Naive thymus-derived CD4-positive, alpha-beta T cell (primary cell): ENCODE measurements at regions of chr2 and their contacts with region 1.

Region 1: GRCh38 chr2:161954103-161954502 is 119.9 kb downstream of the DPP4 start:
- DNase-seq: peak in 7 of 9 donors; percentile 48 to 79 (median 73)
- ATAC-seq: peak; percentile 77
- H3K4me3 ChIP-seq: peak overlapping the region; percentile 12
- H3K4me3 Mint-ChIP-seq: peak overlapping the region in 9 of 10 donors; percentile 42 to 77 (median 60)
- H3K27ac ChIP-seq: no peak overlapping the region
- H3K27ac Mint-ChIP-seq: peak overlapping the region; percentile 19 to 88 (median 78)
- H3K4me1 ChIP-seq: peaks cover 47 to 63% of the 10 kb centered on the region in 2 donors
- H3K4me1 Mint-ChIP-seq: peaks cover 33 to 65% (median 51%) of the 10 kb centered on the region in 7 donors
- H3K27me3 ChIP-seq: no peaks in the 10 kb centered on the region
- H3K27me3 Mint-ChIP-seq: no peaks in the 10 kb centered on the region

Region 2: DNA sequence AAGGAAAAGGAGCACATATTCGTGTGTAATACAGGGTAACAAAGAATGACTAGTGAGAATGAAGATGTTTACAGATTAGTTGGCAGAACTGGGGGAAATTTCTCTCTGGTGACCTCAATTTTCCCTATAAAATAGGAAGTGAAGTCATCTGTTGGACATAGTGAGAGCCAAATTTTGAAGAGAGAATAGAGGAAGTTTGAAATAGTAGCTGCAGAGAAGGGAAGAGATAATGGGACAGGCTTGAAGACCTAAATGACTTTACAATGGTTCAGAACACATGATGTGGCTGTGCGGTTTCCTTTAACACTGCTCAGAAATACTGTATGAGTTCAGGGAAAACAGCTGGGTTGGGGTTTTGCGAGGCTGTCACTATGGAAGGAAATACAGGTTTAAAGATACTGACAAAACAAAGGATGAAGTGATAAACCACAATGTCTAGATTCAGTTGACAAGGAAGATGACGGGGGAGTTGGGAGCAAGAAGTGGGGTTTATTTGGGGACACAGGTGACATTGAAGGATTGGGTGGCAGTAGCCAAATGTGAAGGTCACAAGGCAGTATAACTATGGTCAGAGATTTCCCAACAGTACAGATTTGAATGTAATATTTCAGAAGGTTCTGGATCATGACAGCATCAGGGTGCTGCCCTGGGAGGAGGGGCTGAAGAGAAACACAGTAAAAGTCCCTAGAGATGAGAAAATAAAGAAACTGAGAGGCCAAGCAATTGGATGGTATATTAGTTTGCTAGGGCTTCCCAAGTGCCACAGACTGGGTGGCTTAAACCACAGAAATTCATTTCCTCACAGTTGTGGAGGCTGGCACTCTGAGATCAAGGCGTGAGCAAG is 876.5 kb before region 1 on chr2:
- CTCF ChIA-PET with region 1: no interaction called
- POLR2A ChIA-PET with region 1: no interaction called
- intact Hi-C with region 1: loop called in 1 of 2 experiments (anchors 5 kb)
- DNase-seq: peak; percentile 10 to 84 (median 73)
- ATAC-seq: peak; percentile 90
- H3K4me3 ChIP-seq: peak overlapping the region; percentile 5
- H3K4me3 Mint-ChIP-seq: peak overlapping the region; percentile 1 to 76 (median 62)
- H3K27ac ChIP-seq: peak overlapping the region; percentile 40
- H3K27ac Mint-ChIP-seq: peak overlapping the region; percentile 60 to 94 (median 88)
- H3K4me1 ChIP-seq: peaks cover 23 to 25% of the 10 kb centered on the region in 2 donors
- H3K4me1 Mint-ChIP-seq: peaks cover 24 to 60% (median 29%) of the 10 kb centered on the region in 7 donors
- H3K27me3 ChIP-seq: no peaks in the 10 kb centered on the region
- H3K27me3 Mint-ChIP-seq: no peaks in the 10 kb centered on the region

Region 3: DNA sequence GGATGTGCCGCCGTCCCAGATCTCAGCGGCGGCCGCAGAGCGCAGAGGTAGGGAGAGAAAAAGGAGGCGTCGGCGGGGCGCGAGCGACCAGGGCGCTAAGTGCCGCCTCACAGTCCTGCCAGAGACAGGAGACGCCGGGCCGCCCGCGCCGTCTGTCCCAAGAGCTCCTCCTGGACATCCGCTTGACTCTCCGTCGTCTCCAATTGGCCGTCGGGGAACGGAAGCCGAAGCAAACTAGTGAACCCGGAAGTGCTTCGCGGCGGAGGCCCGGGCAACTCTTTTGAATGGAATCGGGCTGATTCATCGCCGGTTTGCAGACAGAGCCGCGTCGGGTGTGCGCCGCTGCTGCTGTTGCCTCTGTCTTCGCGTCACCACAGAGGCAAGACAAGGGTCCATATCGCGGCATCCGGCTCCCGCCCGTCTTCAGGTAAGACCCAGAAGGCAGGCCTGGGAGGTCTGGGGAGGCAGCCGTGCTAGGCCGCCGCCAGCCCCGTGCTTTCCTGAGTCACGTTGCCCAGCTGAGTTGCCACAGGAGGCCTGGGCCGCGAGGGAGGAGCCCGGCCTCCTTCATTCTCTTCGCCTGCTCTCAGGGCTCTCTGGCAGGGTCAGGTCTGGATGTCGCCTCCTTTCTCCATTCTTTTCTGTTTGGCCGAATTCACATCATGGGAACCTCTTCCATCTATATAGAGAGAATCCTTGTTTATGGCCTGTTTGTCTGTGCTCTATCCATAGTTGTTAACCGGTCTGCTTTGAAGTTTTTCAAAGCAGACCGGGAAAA is 645.7 kb before region 1 on chr2 and contains the start of gene PSMD14:
- CTCF ChIA-PET with region 1: no interaction called
- POLR2A ChIA-PET with region 1: no interaction called
- intact Hi-C with region 1: loop called in 1 of 2 experiments (anchors 5 kb)
- DNase-seq: peak; percentile 67 to 88 (median 85)
- ATAC-seq: peak; percentile 95
- H3K4me3 ChIP-seq: peak within 1 kb of the TSS; percentile 94
- H3K4me3 Mint-ChIP-seq: peak within 1 kb of the TSS; percentile 89 to 98 (median 95)
- H3K27ac ChIP-seq: peak within 1 kb of the TSS; percentile 77
- H3K27ac Mint-ChIP-seq: peak within 1 kb of the TSS; percentile 92 to 97 (median 95)
- H3K4me1 ChIP-seq: peaks cover 3 to 19% of the 10 kb centered on the region in 2 donors
- H3K4me1 Mint-ChIP-seq: peaks cover 24 to 65% (median 42%) of the 10 kb centered on the region in 7 donors
- H3K27me3 ChIP-seq: no peaks in the 10 kb centered on the region
- H3K27me3 Mint-ChIP-seq: peaks cover 0 to 9% (median 3%) of the 10 kb centered on the region in 5 donors
- total RNA-seq, gene PSMD14: 13.2 to 69.5 (median 23.2) TPM

Region 4: GRCh38 chr2:161780881-161781280 is 173.2 kb before region 1 on chr2:
- CTCF ChIA-PET with region 1: no interaction called
- POLR2A ChIA-PET with region 1: no interaction called
- intact Hi-C with region 1: no loop called
- DNase-seq: no peak
- ATAC-seq: no peak
- H3K4me3 ChIP-seq: no peak overlapping the region
- H3K4me3 Mint-ChIP-seq: no peak overlapping the region
- H3K27ac ChIP-seq: no peak overlapping the region
- H3K27ac Mint-ChIP-seq: no peak overlapping the region
- H3K4me1 ChIP-seq: no peaks in the 10 kb centered on the region
- H3K4me1 Mint-ChIP-seq: no peaks in the 10 kb centered on the region
- H3K27me3 ChIP-seq: no peaks in the 10 kb centered on the region
- H3K27me3 Mint-ChIP-seq: peaks cover 0 to 27% (median 9%) of the 10 kb centered on the region in 5 donors

Region 5: DNA sequence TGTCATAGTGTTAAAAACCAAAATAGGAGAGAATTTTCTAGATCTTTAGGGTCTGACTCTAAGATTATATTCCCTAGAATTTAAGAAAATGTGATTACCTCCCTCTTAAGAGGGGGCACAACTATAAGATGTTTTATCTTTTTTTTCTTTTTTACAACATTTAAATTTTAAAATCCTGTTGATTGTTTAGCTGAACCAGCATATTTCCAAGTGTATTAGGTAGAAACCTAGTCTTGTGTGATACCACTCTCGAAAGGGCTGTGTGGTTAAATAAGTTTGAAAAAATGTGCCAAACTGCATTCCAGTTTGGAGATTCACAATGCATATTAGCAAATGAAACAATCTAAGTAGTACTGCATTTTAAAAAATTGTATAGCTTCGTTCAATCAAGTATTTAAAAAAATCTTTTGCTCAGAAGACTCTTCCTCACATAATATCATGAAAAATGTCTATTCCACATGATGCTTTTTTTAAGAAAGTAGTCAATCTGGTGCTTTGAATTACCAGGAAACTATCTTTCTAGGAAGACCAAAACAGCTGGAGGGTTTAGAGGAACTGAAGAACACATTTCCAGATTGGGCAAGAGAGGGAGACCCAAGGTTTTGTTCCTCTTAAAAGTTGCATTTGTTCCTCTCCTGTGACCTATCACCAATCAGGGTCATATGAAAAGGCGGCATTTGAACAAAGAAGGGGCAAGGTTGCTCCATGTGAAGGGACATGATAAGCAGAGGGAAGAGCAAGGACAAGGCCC is 21.1 kb after region 1 on chr2:
- CTCF ChIA-PET with region 1: no interaction called
- POLR2A ChIA-PET with region 1: interaction called, 3 read pairs
- intact Hi-C with region 1: loop called in 1 of 2 experiments (anchors 2 kb)
- DNase-seq: no peak
- ATAC-seq: no peak
- H3K4me3 ChIP-seq: no peak overlapping the region
- H3K4me3 Mint-ChIP-seq: peak overlapping the region in 1 of 10 donors; percentile 39
- H3K27ac ChIP-seq: no peak overlapping the region
- H3K27ac Mint-ChIP-seq: peak overlapping the region in 2 of 9 donors; percentile 27 to 88
- H3K4me1 ChIP-seq: peaks cover 4 to 7% of the 10 kb centered on the region in 2 donors
- H3K4me1 Mint-ChIP-seq: peaks cover 4 to 63% (median 13%) of the 10 kb centered on the region in 7 donors
- H3K27me3 ChIP-seq: no peaks in the 10 kb centered on the region
- H3K27me3 Mint-ChIP-seq: no peaks in the 10 kb centered on the region

Region 6: GRCh38 chr2:162058973-162059668 is 105.0 kb after region 1 on chr2:
- CTCF ChIA-PET with region 1: no interaction called
- POLR2A ChIA-PET with region 1: no interaction called
- intact Hi-C with region 1: loop called (anchors 1 to 2 kb)
- DNase-seq: no peak
- ATAC-seq: peak; percentile 33
- H3K4me3 ChIP-seq: peak overlapping the region; percentile 48
- H3K4me3 Mint-ChIP-seq: peak overlapping the region; percentile 64 to 83 (median 76)
- H3K27ac ChIP-seq: peak overlapping the region; percentile 39
- H3K27ac Mint-ChIP-seq: peak overlapping the region; percentile 45 to 91 (median 84)
- H3K4me1 ChIP-seq: peaks cover 35 to 42% of the 10 kb centered on the region in 2 donors
- H3K4me1 Mint-ChIP-seq: peaks cover 32 to 92% (median 88%) of the 10 kb centered on the region in 7 donors
- H3K27me3 ChIP-seq: no peaks in the 10 kb centered on the region
- H3K27me3 Mint-ChIP-seq: no peaks in the 10 kb centered on the region

Region 7: DNA sequence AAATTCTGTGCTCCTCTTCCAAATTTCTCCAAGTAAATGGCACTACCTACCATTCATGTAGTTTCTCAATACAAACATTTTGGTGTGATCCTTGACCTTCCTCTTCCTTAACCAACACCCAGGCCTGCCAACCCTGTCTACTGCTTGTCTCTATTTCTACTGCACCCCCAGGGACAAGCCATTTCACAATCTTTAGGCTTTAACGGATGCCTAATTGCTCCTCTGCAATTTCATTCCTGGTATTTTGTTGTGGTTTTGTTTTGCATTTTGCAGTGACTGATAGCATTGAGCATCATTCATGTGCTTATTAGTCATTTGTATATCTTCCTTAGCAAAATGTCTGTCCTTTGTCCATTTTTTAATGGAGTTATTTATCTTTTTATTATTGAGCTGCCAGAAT is 279.1 kb after region 1 on chr2:
- CTCF ChIA-PET with region 1: no interaction called
- POLR2A ChIA-PET with region 1: no interaction called
- intact Hi-C with region 1: no loop called
- DNase-seq: no peak
- ATAC-seq: no peak
- H3K4me3 ChIP-seq: no peak overlapping the region
- H3K4me3 Mint-ChIP-seq: no peak overlapping the region
- H3K27ac ChIP-seq: no peak overlapping the region
- H3K27ac Mint-ChIP-seq: no peak overlapping the region
- H3K4me1 ChIP-seq: no peaks in the 10 kb centered on the region
- H3K4me1 Mint-ChIP-seq: no peaks in the 10 kb centered on the region
- H3K27me3 ChIP-seq: no peaks in the 10 kb centered on the region
- H3K27me3 Mint-ChIP-seq: peaks cover 8 to 25% (median 14%) of the 10 kb centered on the region in 5 donors

Region 8: DNA sequence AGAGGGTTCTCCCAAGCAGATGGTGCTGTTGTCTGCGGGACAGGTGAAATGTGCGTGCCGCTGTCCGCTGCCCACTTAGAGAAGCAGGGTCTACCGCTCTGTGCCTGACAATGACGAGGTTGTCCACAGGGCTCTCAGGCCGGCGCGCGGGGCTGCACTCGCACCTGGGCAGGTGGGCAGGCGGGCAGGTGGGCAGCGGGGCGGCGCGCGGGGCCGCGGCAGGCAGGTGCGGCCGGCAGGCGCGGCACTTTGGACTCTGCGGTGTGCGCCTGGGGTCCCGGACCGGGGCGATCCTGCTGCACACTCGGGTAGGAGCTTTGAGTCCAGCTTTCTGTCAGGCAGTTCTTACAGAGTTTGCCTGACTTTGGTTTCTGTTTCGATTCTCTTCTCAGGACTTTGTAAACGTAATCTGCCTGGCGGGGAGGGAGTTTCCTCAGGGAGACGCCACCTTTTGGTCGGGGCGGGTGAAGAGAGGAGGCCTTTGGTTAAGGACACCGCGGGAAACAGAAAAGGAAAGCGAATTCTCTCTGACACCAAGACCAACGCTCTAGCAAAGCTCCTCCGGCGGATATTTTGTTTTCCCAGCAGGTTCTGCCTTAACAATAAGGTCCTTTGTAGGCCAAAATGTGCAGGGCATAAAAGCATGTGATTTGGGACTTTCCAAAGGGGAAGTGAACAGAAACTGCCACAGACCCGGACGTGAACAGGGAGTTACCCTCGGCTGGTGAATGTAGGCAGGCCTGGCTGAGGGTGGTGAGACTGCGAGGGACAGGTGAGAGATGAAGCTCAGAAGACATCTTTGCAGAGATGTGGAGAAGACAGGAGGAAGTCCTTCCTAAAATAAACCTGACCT is 364.5 kb after region 1 on chr2 and contains the start of gene IFIH1:
- CTCF ChIA-PET with region 1: no interaction called
- POLR2A ChIA-PET with region 1: no interaction called
- intact Hi-C with region 1: loop called (anchors 5 to 10 kb)
- DNase-seq: peak; percentile 60 to 86 (median 73)
- ATAC-seq: peak; percentile 93
- H3K4me3 ChIP-seq: peak within 1 kb of the TSS; percentile 93
- H3K4me3 Mint-ChIP-seq: peak within 1 kb of the TSS; percentile 89 to 100 (median 95)
- H3K27ac ChIP-seq: peak within 1 kb of the TSS; percentile 85
- H3K27ac Mint-ChIP-seq: peak within 1 kb of the TSS; percentile 97 to 100 (median 99)
- H3K4me1 ChIP-seq: peaks cover 22 to 40% of the 10 kb centered on the region in 2 donors
- H3K4me1 Mint-ChIP-seq: peaks cover 43 to 69% (median 62%) of the 10 kb centered on the region in 7 donors
- H3K27me3 ChIP-seq: no peaks in the 10 kb centered on the region
- H3K27me3 Mint-ChIP-seq: no peaks in the 10 kb centered on the region
- total RNA-seq, gene IFIH1: 20.6 to 77.9 (median 30.7) TPM